ENCODE measurements at regions of chr9 and their contacts with region 1.

Region 1: DNA sequence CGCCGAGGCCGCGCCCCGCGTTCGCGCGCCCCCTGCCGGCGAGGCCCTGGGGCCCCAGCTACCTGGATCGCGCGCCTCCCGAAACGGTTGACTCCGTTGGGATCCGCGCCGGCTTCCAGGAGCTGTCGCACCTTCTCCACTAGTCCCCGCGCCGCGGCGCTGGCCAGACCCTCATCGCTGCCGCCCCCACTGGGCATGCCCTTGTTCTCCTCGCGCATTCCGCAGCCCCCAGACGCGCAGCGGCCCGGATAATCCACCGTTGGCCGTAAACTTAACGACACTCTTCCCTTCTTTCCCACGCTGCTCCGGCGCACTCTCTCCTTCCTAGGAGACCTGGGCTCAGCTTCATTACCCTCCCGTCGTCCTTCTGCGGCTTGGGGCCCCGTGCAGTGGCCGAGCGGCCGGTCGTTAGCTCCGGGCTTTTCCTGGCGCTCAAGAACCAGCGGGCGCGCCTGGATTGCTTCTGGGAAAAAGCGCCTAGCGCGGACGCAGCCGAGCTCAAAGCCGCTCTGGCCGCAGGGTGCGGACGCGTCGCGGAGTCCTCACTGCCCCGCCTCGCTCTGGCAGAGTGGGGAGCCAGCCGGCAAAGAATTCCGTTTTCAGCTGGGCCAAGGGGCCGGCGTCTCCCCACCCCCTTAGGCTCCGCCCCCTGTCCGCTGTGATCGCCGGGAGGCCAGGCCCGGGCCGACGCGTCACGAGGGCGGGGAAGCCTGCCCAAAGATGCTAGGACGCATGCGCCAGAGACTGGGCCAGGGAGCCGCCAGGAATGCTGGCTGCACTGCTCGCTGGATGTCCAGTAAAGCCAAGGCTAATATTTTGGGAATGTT is at the start of gene CDKN2B:
- DNase-seq: peak; percentile 78
- ATAC-seq: peak; percentile 94
- H3K4me3 Mint-ChIP-seq: peak within 1 kb of the TSS; percentile 87
- H3K27ac Mint-ChIP-seq: peak within 1 kb of the TSS; percentile 24
- H3K4me1 Mint-ChIP-seq: peaks cover 34% of the 10 kb centered on the region
- H3K27me3 Mint-ChIP-seq: peaks cover 29% of the 10 kb centered on the region
- CTCF ChIP-seq: peak; percentile 79
- total RNA-seq, gene CDKN2B: 0.32 and 0.38 TPM in 2 replicates

Region 2: GRCh38 chr9:21812946-21813568 is 195.9 kb before region 1 on chr9:
- CTCF ChIA-PET with region 1: interaction called, 73 read pairs
- POLR2A ChIA-PET with region 1: no interaction called
- intact Hi-C with region 1: loop called (anchors 1 kb)
- DNase-seq: peak; percentile 64
- ATAC-seq: peak; percentile 83
- H3K4me3 Mint-ChIP-seq: no peak overlapping the region
- H3K27ac Mint-ChIP-seq: no peak overlapping the region
- H3K4me1 Mint-ChIP-seq: peaks cover 27% of the 10 kb centered on the region
- H3K27me3 Mint-ChIP-seq: no peaks in the 10 kb centered on the region
- CTCF ChIP-seq: peak; percentile 85

Region 3: GRCh38 chr9:21965401-21965951 is 43.5 kb before region 1 on chr9:
- CTCF ChIA-PET with region 1: interaction called, 28 read pairs
- POLR2A ChIA-PET with region 1: interaction called, 3 read pairs
- intact Hi-C with region 1: loop called (anchors 1 kb)
- DNase-seq: peak; percentile 41
- ATAC-seq: peak; percentile 67
- H3K4me3 Mint-ChIP-seq: peak overlapping the region; percentile 77
- H3K27ac Mint-ChIP-seq: peak overlapping the region; percentile 64
- H3K4me1 Mint-ChIP-seq: peaks cover 19% of the 10 kb centered on the region
- H3K27me3 Mint-ChIP-seq: peaks cover 74% of the 10 kb centered on the region
- CTCF ChIP-seq: no peak

Region 4: GRCh38 chr9:21995177-21996086 is 13.5 kb before region 1 on chr9:
- CTCF ChIA-PET with region 1: interaction called, 21 read pairs
- POLR2A ChIA-PET with region 1: interaction called, 18 read pairs
- intact Hi-C with region 1: loop called (anchors 1 kb)
- DNase-seq: peak; percentile 82
- ATAC-seq: peak; percentile 84
- H3K4me3 Mint-ChIP-seq: peak overlapping the region; percentile 98
- H3K27ac Mint-ChIP-seq: peak overlapping the region; percentile 97
- H3K4me1 Mint-ChIP-seq: peaks cover 24% of the 10 kb centered on the region
- H3K27me3 Mint-ChIP-seq: no peaks in the 10 kb centered on the region
- CTCF ChIP-seq: no peak

Region 5: GRCh38 chr9:22037954-22038690 is 29.2 kb after region 1 on chr9:
- CTCF ChIA-PET with region 1: interaction called, 21 read pairs
- POLR2A ChIA-PET with region 1: no interaction called
- intact Hi-C with region 1: loop called (anchors 2 kb)
- DNase-seq: no peak
- ATAC-seq: no peak
- H3K4me3 Mint-ChIP-seq: no peak overlapping the region
- H3K27ac Mint-ChIP-seq: no peak overlapping the region
- H3K4me1 Mint-ChIP-seq: no peaks in the 10 kb centered on the region
- H3K27me3 Mint-ChIP-seq: no peaks in the 10 kb centered on the region
- CTCF ChIP-seq: no peak

Region 6: GRCh38 chr9:22244141-22245011 is 235.4 kb after region 1 on chr9:
- CTCF ChIA-PET with region 1: interaction called, 45 read pairs
- POLR2A ChIA-PET with region 1: no interaction called
- intact Hi-C with region 1: loop called (anchors 1 kb)
- DNase-seq: no peak
- ATAC-seq: peak; percentile 54
- H3K4me3 Mint-ChIP-seq: no peak overlapping the region
- H3K27ac Mint-ChIP-seq: no peak overlapping the region
- H3K4me1 Mint-ChIP-seq: peaks cover 39% of the 10 kb centered on the region
- H3K27me3 Mint-ChIP-seq: peaks cover 15% of the 10 kb centered on the region
- CTCF ChIP-seq: no peak

Measured in activated B cell treated with CpG ODN at 0.5 μM for 24 hours (primary cell).